ENCODE measurements at regions of chr20 and their contacts with region 1.

Region 1: DNA sequence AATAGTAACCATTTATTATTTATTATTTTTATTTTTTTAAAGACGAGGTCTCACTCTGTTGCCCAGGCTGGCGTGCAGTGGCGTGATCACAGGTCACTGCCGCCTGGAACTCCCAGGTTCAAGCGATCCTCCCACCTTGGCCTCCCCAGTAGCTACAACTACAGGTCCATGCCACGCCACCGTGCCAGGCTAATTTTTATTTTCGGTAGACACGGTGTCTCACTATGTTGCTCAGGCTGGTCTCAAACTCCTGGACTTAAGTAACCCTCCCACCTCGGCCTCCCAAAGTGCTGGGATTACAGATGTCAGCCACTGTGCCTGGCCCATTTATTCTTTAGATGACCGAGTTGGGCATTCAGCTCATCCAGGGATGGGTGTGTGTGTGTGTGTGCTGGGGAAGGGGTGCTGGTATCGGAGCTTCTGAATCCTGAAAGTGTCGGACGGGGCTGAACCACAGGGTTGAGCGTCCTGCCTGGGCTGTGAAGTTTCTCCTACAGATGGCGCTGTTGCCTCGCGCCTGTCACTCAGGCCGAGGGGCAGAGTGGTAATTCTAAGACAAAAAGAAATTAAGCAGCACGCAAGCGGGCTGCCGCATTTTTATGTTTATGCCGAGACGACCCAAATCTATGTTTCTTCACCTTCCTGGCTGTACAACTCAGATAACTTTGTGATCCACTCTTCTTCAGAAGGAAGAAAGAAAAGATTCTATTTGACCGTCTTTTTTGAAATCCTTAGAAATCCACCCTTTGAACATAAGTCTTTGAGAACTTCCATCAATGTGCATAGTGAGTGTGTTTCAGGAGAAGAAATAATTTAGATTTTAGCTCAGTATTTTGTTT is 252.8 kb downstream of the CDH26 start:
- ATAC-seq: peak; percentile 79 to 97 (median 88)
- H3K4me3 ChIP-seq: no peak overlapping the region
- H3K27ac ChIP-seq: no peak overlapping the region
- H3K4me1 ChIP-seq: peaks cover 16 to 18% of the 10 kb centered on the region in 2 donors

Region 2: DNA sequence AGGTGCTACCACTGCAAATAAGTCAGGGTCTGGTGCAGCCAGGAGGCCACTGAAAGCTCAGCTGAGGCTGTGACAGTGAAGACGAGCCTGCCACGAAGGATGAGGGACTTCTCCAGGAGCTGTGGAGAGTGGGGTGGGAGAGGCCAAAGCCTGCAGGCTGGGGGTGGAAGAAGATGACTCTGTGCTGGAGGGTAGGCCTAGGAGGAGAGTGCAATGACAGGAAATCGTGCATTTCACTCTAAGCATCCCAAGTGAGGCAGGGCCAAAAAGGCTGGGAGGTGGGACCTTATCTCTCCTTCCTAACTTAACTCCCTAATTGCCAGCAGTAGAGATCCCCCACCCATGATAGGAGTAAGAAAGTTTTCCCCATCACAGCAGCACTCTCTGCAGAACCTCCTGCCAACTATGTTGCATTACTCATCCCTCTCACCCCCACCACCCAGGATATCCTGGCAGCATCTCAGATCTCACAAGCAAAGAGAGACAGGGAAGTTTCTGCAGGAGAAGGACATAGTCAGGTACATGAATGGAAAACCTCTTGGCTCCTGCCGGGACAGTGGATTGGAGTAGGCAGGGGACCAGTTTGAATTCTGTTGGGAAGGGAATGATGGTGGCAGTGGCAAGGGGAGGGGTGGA is 213.4 kb after region 1 on chr20:
- in situ Hi-C with region 1: no loop called
- ATAC-seq: no peak
- H3K4me3 ChIP-seq: no peak overlapping the region
- H3K27ac ChIP-seq: no peak overlapping the region
- H3K4me1 ChIP-seq: no peaks in the 10 kb centered on the region

Region 3: GRCh38 chr20:60837173-60837770 is 626.3 kb after region 1 on chr20:
- in situ Hi-C with region 1: loop called in 1 of 9 experiments (anchors 25 kb)
- ATAC-seq: peak in 6 of 8 experiments; percentile 23 to 89 (median 61)
- H3K4me3 ChIP-seq: no peak overlapping the region
- H3K27ac ChIP-seq: no peak overlapping the region
- H3K4me1 ChIP-seq: peaks cover 5 to 6% of the 10 kb centered on the region in 2 donors

Region 4: DNA sequence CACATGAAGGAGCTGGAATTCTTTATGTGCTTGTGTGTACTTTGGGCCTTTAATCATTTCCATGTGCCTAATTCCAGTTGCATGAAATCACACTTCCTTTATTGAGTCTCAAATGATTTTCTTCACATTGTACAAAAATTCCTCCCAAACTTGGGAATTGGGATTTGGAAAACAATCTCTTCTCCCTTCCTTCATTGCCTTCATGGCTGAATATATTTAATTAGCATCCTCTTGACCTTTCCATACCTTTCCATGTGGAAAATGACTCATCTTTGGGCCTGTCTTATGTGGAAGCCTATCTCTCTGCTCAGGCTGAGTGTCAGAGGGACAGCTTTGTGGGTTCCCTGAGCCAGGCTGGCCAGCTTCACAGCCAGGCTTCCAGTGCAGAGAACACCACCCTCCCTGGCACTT is 1008.0 kb after region 1 on chr20:
- in situ Hi-C with region 1: loop called in 1 of 9 experiments (anchors 25 kb)
- ATAC-seq: peak in 4 of 8 experiments; percentile 27 to 62 (median 40)
- H3K4me3 ChIP-seq: no peak overlapping the region
- H3K27ac ChIP-seq: no peak overlapping the region
- H3K4me1 ChIP-seq: peaks cover 13 to 16% of the 10 kb centered on the region in 2 donors

Region 5: DNA sequence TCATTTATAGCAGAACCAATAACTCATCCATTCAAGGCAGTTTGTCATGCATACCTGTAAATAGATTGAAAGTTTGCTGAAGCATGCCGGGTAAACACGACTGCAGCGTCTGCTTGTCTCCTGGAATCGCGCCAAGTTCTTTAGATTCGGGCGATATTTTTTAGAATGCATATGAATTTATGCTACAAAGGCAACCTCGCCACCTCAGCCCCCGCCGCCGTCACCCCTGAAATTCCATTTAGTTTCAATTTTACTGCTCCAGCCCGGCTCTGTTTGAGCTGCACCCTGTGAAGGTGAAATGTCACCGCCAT is 1023.8 kb after region 1 on chr20:
- in situ Hi-C with region 1: loop called in 1 of 9 experiments (anchors 25 kb)
- ATAC-seq: no peak
- H3K4me3 ChIP-seq: no peak overlapping the region
- H3K27ac ChIP-seq: no peak overlapping the region
- H3K4me1 ChIP-seq: peaks cover 12 to 20% of the 10 kb centered on the region in 2 donors

Region 6: GRCh38 chr20:61886721-61887594 is 1676.0 kb after region 1 on chr20:
- in situ Hi-C with region 1: loop called in 1 of 9 experiments (anchors 25 kb)
- ATAC-seq: peak; percentile 85 to 93 (median 86)
- H3K4me3 ChIP-seq: no peak overlapping the region
- H3K27ac ChIP-seq: no peak overlapping the region
- H3K4me1 ChIP-seq: peaks cover 13 to 18% of the 10 kb centered on the region in 2 donors